ENCODE measurements at regions of chr5 and their contacts with region 1.

Region 1: DNA sequence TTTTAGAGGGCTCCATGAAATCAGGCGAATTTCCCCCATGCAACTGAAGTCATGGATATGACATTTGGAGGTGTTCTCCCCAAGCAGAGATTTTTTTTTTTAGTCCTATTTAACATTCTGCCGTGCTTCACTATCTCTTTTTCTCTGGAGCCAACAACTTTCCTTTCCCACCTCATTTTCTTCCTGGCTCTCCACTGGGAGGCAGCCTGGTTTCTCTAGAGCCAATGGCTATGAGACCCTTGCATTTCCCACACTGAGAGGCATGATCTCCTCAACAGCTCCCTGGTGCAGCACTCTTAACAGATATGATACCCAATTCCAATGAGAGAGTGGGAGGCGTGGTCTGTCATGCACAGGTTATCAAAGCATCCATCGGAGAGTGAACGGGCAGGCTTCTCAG is 310.8 kb downstream of the DRD1 start:
- DNase-seq: no peak
- H3K4me3 ChIP-seq: no peak overlapping the region
- H3K27ac ChIP-seq: no peak overlapping the region
- H3K4me1 ChIP-seq: no peaks in the 10 kb centered on the region
- H3K27me3 ChIP-seq: no peaks in the 10 kb centered on the region
- CTCF ChIP-seq: no peak

Region 2: GRCh38 chr5:173745123-173745522 is 1388.1 kb before region 1 on chr5:
- CTCF ChIA-PET with region 1: no interaction called
- POLR2A ChIA-PET with region 1: no interaction called
- intact Hi-C with region 1: no loop called
- DNase-seq: no peak
- H3K4me3 ChIP-seq: no peak overlapping the region
- H3K27ac ChIP-seq: no peak overlapping the region
- H3K4me1 ChIP-seq: no peaks in the 10 kb centered on the region
- H3K27me3 ChIP-seq: no peaks in the 10 kb centered on the region
- CTCF ChIP-seq: no peak

Region 3: DNA sequence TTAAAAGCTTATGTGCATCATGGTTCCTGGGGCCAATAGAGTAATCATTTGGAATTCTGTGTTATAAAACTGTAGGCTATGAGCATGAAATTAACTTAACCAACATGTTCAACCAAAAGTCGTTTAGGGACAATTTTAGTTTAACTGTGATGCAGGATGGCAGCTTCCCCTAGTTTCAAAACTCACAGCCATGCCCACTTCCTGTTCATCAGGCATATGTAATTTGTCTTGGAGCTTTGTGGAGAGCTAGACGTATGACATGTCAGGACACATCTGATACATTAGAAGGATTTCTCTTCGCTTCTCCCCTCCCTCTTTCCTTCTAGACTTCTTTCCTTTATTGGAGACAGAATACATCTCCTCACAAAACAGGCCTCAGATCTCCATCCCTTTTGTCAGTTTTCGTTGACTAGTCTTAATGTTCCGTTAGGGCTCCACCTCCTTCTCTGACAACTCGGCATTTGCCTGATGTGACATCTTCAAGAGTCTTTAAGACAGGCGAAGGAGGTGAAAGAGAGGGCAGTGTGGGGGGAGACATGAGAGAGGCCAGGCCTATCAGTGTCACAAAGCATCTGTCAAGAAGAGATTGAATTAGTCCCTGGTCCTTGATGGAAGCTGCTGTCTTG is 232.8 kb before region 1 on chr5:
- CTCF ChIA-PET with region 1: no interaction called
- POLR2A ChIA-PET with region 1: no interaction called
- intact Hi-C with region 1: no loop called
- DNase-seq: peak; percentile 4
- H3K4me3 ChIP-seq: no peak overlapping the region
- H3K27ac ChIP-seq: no peak overlapping the region
- H3K4me1 ChIP-seq: no peaks in the 10 kb centered on the region
- H3K27me3 ChIP-seq: no peaks in the 10 kb centered on the region
- CTCF ChIP-seq: no peak

Region 4: DNA sequence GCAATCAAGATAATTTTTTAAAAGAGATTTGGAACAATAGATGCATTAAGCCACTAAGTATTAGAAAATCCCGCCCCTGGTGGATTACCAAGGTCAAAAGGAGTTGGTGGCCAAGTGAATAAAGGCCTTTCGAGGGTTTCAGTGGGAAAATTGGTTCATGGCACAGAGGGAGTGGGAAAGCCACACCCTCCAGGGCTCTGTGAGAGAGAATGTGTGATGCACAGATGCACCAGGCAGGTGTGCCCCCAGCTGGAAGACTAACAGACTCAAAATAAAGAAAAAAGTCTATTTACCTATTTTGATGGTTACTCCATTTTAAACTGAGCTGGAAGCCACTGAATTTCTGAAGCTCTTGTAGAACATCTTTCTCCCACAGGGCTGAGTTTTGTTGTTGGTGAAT is 32.8 kb after region 1 on chr5:
- CTCF ChIA-PET with region 1: no interaction called
- POLR2A ChIA-PET with region 1: interaction called, 18 read pairs
- intact Hi-C with region 1: no loop called
- DNase-seq: no peak
- H3K4me3 ChIP-seq: no peak overlapping the region
- H3K27ac ChIP-seq: no peak overlapping the region
- H3K4me1 ChIP-seq: no peaks in the 10 kb centered on the region
- H3K27me3 ChIP-seq: peaks cover 4% of the 10 kb centered on the region
- CTCF ChIP-seq: no peak

Region 5: DNA sequence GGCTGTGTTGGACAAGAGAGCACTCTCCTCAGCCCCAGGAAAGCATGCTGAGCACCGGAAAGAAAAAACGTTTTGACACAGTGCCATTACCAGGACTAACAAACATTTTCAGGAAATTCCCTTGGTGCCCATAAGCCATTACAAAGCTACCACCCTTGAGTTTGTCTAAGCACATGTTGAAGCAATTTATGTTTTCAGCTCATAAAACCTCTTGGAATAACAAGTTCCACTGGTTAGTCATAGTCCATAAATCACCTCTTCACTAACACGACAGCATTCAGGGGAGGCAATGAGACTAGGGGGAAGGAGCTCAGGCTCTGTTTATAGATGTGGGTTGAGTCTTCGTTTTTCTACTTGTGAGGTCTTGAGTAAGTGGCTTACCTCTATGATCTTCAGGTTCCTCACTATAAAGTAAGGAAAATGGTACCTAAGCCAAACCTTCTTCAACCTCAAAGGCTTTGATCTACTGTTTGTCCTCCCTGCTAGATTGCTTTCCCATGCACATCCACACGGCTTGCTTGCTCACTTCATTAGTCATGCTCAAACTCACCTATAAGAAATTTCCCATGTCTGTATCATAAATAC is 245.4 kb after region 1 on chr5:
- CTCF ChIA-PET with region 1: no interaction called
- POLR2A ChIA-PET with region 1: no interaction called
- intact Hi-C with region 1: no loop called
- DNase-seq: peak; percentile 96
- H3K4me3 ChIP-seq: no peak overlapping the region
- H3K27ac ChIP-seq: no peak overlapping the region
- H3K4me1 ChIP-seq: peaks cover 34% of the 10 kb centered on the region
- H3K27me3 ChIP-seq: peaks cover 15% of the 10 kb centered on the region
- CTCF ChIP-seq: no peak

Measured in A673 (cell line).